Activated CD4-positive, alpha-beta memory T cell treated with anti-CD3 and anti-CD28 coated beads for 36 hours (primary cell): ENCODE measurements at regions of chr2 and their contacts with region 1.

Region 1: GRCh38 chr2:144516981-144517865 is 2.7 kb downstream of the ZEB2 start:
- DNase-seq: peak; percentile 68
- H3K4me3 Mint-ChIP-seq: no peak overlapping the region
- H3K27ac Mint-ChIP-seq: peak overlapping the region; percentile 97
- H3K4me1 Mint-ChIP-seq: peaks cover 17% of the 10 kb centered on the region
- H3K27me3 Mint-ChIP-seq: peaks cover 46% of the 10 kb centered on the region

Region 2: GRCh38 chr2:143705108-143705686 is 812.0 kb before region 1 on chr2:
- CTCF ChIA-PET with region 1: no interaction called
- POLR2A ChIA-PET with region 1: no interaction called
- intact Hi-C with region 1: loop called (anchors 2 kb)
- DNase-seq: no peak
- H3K4me3 Mint-ChIP-seq: no peak overlapping the region
- H3K27ac Mint-ChIP-seq: peak overlapping the region; percentile 68
- H3K4me1 Mint-ChIP-seq: peaks cover 41% of the 10 kb centered on the region
- H3K27me3 Mint-ChIP-seq: no peaks in the 10 kb centered on the region

Region 3: GRCh38 chr2:144166743-144167142 is 350.5 kb before region 1 on chr2:
- CTCF ChIA-PET with region 1: no interaction called
- POLR2A ChIA-PET with region 1: no interaction called
- intact Hi-C with region 1: loop called (anchors 5 kb)
- DNase-seq: no peak
- H3K4me3 Mint-ChIP-seq: no peak overlapping the region
- H3K27ac Mint-ChIP-seq: no peak overlapping the region
- H3K4me1 Mint-ChIP-seq: no peaks in the 10 kb centered on the region
- H3K27me3 Mint-ChIP-seq: no peaks in the 10 kb centered on the region

Region 4: GRCh38 chr2:144310484-144310883 is 206.7 kb before region 1 on chr2:
- CTCF ChIA-PET with region 1: no interaction called
- POLR2A ChIA-PET with region 1: no interaction called
- intact Hi-C with region 1: no loop called
- DNase-seq: no peak
- H3K4me3 Mint-ChIP-seq: no peak overlapping the region
- H3K27ac Mint-ChIP-seq: no peak overlapping the region
- H3K4me1 Mint-ChIP-seq: peaks cover 21% of the 10 kb centered on the region
- H3K27me3 Mint-ChIP-seq: no peaks in the 10 kb centered on the region

Region 5: DNA sequence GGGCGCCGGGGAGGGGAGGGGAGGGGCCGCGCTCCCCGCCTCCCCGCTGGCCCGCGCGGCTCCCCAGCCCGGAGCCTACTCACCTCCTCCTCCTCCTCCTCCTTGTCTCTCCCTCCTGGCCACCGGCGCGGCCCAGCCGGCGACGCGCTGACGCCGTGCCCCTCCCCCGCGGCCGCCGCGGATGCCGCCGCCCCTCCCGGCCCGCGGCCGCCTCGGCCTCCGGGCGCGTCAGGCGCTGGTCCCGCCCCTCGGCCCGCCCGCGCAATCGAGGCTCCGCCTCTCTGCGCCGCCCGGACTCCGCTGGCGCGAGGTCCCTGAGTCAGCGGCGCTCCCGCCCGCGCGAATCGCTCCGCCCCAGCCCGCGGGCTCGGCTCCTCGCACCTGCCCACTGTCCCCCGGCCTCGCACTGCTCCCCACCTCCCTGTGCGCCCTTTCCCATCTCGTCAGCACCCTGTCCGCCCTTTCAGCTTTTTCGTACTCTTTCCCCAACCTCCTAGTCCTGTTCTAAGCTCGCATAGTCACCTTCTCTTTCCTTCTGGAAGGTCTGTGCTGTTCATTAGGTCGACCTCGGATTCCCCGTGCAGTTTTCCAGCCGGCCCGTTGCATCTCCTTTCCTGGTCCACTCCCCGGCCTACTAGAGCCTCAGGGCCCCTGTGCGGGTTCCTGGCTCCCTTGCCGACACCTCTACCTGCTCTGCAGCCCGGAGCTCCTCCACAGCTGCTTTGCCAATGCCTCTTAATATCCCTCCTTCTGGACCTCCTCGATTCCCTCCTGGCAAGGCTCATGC is 184.7 kb before region 1 on chr2:
- CTCF ChIA-PET with region 1: no interaction called
- POLR2A ChIA-PET with region 1: no interaction called
- intact Hi-C with region 1: loop called (anchors 1 kb)
- DNase-seq: peak; percentile 92
- H3K4me3 Mint-ChIP-seq: peak overlapping the region; percentile 91
- H3K27ac Mint-ChIP-seq: peak overlapping the region; percentile 96
- H3K4me1 Mint-ChIP-seq: peaks cover 33% of the 10 kb centered on the region
- H3K27me3 Mint-ChIP-seq: no peaks in the 10 kb centered on the region

Region 6: DNA sequence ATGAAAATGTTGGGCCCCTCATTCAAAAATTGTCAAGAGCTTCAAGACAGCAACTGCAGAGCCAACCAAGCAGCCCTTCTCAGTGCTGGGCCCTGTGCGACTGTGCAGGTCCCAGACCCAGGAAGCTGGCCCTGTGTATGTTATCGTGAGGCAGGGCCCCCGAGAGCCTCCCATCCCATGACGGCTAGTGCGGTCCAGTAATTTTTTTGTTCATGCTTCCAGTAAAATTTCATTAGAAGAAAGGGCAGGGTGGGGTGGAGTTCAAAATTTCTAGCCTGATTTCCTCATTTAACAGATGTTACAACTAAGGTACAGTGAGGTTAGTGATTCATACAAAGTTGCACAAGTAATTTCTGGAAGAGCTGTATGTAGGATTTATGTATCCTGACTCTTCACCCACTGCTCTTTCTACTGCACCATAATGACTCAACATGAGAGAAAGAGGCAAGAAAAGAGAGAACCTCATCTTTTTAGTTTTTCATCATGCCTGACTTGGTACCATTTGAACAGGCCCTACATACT is 102.8 kb before region 1 on chr2:
- CTCF ChIA-PET with region 1: interaction called, 3 read pairs
- POLR2A ChIA-PET with region 1: no interaction called
- intact Hi-C with region 1: loop called (anchors 1 kb)
- DNase-seq: peak; percentile 40
- H3K4me3 Mint-ChIP-seq: no peak overlapping the region
- H3K27ac Mint-ChIP-seq: peak overlapping the region; percentile 66
- H3K4me1 Mint-ChIP-seq: peaks cover 24% of the 10 kb centered on the region
- H3K27me3 Mint-ChIP-seq: no peaks in the 10 kb centered on the region

Region 7: DNA sequence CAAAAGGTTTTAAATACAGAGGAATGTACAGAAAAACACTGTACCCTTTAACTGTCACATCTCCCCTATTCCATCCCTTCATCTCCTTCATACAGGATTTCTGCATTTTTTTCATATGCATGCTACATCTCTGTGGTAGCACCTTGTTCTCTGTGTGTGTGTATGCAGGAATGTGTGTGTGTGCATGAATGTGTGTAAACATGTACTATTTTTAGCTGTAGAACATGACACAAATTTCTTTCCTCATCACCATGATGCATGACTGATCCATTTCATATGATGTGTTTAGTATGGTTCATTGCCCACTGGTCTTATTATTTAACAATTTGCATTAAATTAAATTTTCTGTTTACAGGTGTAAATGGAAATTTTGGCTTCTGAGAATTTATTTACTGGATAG is 24.2 kb after region 1 on chr2:
- CTCF ChIA-PET with region 1: no interaction called
- POLR2A ChIA-PET with region 1: no interaction called
- intact Hi-C with region 1: no loop called
- DNase-seq: no peak
- H3K4me3 Mint-ChIP-seq: no peak overlapping the region
- H3K27ac Mint-ChIP-seq: no peak overlapping the region
- H3K4me1 Mint-ChIP-seq: no peaks in the 10 kb centered on the region
- H3K27me3 Mint-ChIP-seq: peaks cover 9% of the 10 kb centered on the region

Region 8: DNA sequence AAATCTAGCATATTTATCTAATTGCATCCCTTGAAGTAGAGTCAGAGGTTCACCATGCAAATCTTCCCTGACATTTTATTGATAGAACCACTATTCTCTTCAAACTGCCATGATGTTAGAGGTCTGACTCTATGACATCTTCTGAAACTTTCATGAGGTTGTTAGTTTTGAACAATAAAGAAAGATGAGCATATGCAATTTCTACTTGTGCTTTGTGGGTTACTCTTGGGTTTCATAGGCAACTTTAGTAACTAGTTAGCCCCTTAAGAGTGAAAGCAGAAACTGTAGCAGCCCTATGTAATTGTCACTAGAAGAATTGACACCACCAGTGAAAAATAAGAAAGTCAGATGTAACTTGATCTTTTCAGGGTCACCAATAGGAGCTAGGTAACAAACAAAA is 55.8 kb after region 1 on chr2:
- CTCF ChIA-PET with region 1: no interaction called
- POLR2A ChIA-PET with region 1: no interaction called
- intact Hi-C with region 1: loop called (anchors 2 kb)
- DNase-seq: no peak
- H3K4me3 Mint-ChIP-seq: no peak overlapping the region
- H3K27ac Mint-ChIP-seq: no peak overlapping the region
- H3K4me1 Mint-ChIP-seq: peaks cover 23% of the 10 kb centered on the region
- H3K27me3 Mint-ChIP-seq: peaks cover 6% of the 10 kb centered on the region

Region 9: GRCh38 chr2:144747571-144747970 is 230.3 kb after region 1 on chr2:
- CTCF ChIA-PET with region 1: no interaction called
- POLR2A ChIA-PET with region 1: no interaction called
- intact Hi-C with region 1: no loop called
- DNase-seq: no peak
- H3K4me3 Mint-ChIP-seq: no peak overlapping the region
- H3K27ac Mint-ChIP-seq: no peak overlapping the region
- H3K4me1 Mint-ChIP-seq: no peaks in the 10 kb centered on the region
- H3K27me3 Mint-ChIP-seq: no peaks in the 10 kb centered on the region